Naive thymus-derived CD4-positive, alpha-beta T cell (primary cell): ENCODE measurements at regions of chr11 and their contacts with region 1.

Region 1: DNA sequence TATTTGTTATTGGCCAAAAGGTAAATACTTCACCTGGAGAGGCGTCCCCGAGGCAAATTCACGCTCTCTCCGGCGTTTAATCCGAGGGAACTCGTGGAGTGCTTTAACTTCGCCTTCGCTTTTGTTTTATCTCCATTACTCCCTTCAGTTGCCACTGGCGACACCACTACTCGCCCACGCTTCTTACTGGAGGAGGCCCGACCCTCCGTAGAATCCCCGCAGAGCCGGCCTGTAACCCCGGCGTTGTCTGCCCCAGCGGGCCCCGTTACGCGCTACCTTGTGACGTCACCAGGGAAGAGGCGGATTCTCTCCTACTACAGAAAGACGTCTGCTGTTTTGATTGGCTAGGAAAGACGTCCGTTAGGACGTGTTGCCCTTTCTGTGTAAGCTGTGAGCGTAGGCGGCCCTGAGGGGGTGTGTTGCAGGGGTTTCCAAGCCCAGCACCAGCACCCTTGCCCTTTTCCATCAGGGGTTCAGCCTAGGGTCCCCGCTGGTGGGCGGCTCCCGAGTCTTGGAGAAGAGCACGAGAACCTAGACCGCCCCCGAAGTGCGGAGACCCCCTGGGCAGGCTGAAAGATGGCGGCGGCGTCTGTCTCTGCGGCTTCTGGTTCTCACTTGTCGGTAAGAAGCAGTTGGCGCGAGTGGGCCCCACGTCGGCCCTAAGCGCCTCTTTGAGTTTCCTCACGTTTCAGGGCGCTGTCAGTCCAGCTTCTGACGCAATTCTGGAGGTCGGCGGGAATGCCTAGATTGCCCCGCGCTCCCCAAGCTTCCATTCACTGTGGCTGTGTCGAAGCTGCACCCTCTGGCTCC is at the start of gene CEP57:
- DNase-seq: peak; percentile 80 to 98 (median 96)
- ATAC-seq: peak; percentile 70
- H3K4me3 ChIP-seq: peak within 1 kb of the TSS; percentile 97
- H3K4me3 Mint-ChIP-seq: peak within 1 kb of the TSS; percentile 93 to 100 (median 100)
- H3K27ac ChIP-seq: peak within 1 kb of the TSS; percentile 99
- H3K27ac Mint-ChIP-seq: peak within 1 kb of the TSS; percentile 100
- H3K4me1 ChIP-seq: peaks cover 21 to 22% of the 10 kb centered on the region in 2 donors
- H3K4me1 Mint-ChIP-seq: peaks cover 47 to 74% (median 61%) of the 10 kb centered on the region in 7 donors
- H3K27me3 ChIP-seq: no peaks in the 10 kb centered on the region
- H3K27me3 Mint-ChIP-seq: no peaks in the 10 kb centered on the region
- total RNA-seq, gene CEP57: 47.8 to 72.3 (median 68.9) TPM

Region 2: DNA sequence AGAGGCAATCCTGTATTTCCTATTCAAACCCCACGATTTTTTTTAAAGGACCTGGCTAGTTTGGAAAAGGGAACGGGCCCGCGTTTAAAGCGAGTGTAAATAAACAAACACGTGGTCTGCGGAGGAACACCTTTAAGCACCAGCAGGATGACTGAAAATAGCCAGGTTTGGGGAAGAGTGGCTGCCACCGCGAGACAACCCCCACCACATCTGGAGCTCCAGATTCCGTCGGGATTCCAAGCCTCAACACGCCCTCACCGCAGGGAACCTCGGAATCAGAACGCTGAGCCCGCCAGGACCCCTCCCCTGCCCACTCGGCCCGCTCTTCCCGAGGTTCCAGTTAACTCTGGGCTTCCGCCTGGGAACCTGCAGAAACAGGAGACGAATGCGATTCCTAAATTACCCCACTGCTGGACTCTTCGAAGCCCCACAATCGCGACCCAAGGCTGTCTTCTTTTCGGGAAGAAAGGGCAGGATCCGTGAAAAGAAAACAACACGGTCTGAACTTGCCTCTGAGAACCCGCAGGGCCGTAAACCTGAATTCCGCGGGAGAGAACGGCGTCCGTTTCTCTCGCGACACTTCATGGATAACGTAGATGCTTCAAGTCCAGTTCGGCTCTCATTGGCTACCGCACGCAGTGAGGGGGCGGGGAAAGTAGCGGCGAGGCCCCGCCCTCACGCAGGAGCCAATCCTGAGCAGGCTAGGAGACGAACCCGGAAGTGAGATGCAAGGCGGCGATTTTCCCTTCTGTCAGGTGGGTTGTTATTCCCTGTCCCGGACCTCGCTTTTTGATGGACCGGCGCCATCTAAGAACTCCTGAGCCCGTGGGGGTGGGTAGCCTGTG is 1296.8 kb before region 1 on chr11 and contains the starts of genes ANKRD49 and MRE11:
- CTCF ChIA-PET with region 1: no interaction called
- POLR2A ChIA-PET with region 1: no interaction called
- intact Hi-C with region 1: loop called (anchors 1 to 2 kb)
- DNase-seq: peak; percentile 92 to 98 (median 97)
- ATAC-seq: peak; percentile 100
- H3K4me3 ChIP-seq: peak within 1 kb of the TSS; percentile 94
- H3K4me3 Mint-ChIP-seq: peak within 1 kb of the TSS; percentile 92 to 99 (median 96)
- H3K27ac ChIP-seq: peak within 1 kb of the TSS; percentile 93
- H3K27ac Mint-ChIP-seq: peak within 1 kb of the TSS; percentile 91 to 99 (median 97)
- H3K4me1 ChIP-seq: peaks cover 18 to 28% of the 10 kb centered on the region in 2 donors
- H3K4me1 Mint-ChIP-seq: peaks cover 31 to 64% (median 42%) of the 10 kb centered on the region in 7 donors
- H3K27me3 ChIP-seq: no peaks in the 10 kb centered on the region
- H3K27me3 Mint-ChIP-seq: no peaks in the 10 kb centered on the region
- total RNA-seq, gene ANKRD49: 25.6 to 64.4 (median 44.5) TPM
- total RNA-seq, gene MRE11: 19.0 to 45.5 (median 40.1) TPM

Region 3: DNA sequence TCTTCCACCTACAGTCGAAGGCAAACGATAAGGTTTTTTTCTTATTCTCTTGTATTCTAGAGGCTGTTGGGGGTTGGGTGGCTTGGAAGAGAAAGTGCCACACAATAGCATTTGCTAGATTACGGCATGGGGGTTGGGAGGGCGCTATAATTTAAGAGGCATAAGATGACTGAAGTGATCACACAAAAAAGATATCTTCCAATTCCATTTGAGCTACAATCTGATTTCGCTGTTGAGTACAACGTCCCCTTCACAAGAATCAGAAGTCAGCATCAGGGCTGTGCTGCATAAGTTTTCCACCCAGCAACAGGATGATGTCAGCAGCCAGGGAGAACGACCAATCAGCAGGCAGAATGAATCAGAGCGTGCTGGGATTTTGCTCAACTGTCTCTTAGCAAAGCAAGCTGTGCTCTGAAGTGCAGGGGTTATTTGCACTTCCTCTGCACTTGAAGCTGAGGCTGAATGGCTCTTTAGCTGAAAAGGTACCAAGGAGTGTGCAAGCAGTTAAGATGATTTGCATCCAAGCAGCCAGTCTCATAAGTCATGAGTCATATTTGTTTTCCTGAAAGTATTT is 536.1 kb before region 1 on chr11:
- CTCF ChIA-PET with region 1: no interaction called
- POLR2A ChIA-PET with region 1: no interaction called
- intact Hi-C with region 1: loop called in 1 of 2 experiments (anchors 1 kb)
- DNase-seq: peak; percentile 45 to 91 (median 84)
- ATAC-seq: peak; percentile 98
- H3K4me3 ChIP-seq: peak overlapping the region; percentile 52
- H3K4me3 Mint-ChIP-seq: peak overlapping the region; percentile 74 to 98 (median 89)
- H3K27ac ChIP-seq: peak overlapping the region; percentile 71
- H3K27ac Mint-ChIP-seq: peak overlapping the region; percentile 81 to 98 (median 90)
- H3K4me1 ChIP-seq: peaks cover 13 to 31% of the 10 kb centered on the region in 2 donors
- H3K4me1 Mint-ChIP-seq: peaks cover 20 to 59% (median 53%) of the 10 kb centered on the region in 7 donors
- H3K27me3 ChIP-seq: no peaks in the 10 kb centered on the region
- H3K27me3 Mint-ChIP-seq: no peaks in the 10 kb centered on the region

Region 4: DNA sequence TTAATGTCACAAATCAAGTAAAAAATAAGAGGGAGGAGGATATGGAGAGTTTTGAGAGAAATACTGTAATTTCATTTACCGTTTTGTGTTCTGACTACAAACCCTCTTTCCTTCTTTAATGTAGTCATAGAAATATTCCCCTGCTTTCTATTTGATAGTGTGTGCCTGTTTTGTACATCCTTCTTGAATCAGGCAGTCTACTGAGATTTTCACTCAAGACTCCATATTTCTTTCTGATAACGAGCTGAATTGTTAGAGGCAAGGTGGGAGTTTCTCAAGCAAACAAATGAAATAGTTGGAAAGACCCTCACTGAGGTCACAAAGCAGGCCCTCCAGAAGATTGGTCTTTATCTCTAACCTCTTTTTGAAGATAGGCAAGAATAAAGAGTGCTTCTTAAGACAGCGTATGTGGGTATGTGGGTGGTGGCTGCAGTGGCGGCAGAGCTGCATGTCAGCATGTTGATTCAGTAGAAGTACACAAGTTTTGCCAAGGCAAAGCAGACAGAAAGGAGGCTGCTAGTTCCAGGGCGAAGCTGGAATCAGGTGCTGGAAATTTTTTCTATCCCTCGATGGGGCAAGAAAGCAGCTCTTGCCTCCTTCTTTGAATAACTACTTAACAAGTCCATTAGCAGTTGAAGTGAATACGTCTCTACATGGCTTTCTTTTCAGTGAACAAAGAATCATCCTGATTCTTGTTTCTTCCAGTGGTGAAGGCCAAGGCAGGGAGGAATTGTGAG is 165.0 kb before region 1 on chr11:
- CTCF ChIA-PET with region 1: no interaction called
- POLR2A ChIA-PET with region 1: no interaction called
- intact Hi-C with region 1: no loop called
- DNase-seq: peak in 1 of 9 donors; percentile 8
- ATAC-seq: peak; percentile 27
- H3K4me3 ChIP-seq: no peak overlapping the region
- H3K4me3 Mint-ChIP-seq: peak overlapping the region in 5 of 10 donors; percentile 13 to 66 (median 47)
- H3K27ac ChIP-seq: peak overlapping the region; percentile 52
- H3K27ac Mint-ChIP-seq: peak overlapping the region in 8 of 9 donors; percentile 22 to 82 (median 70)
- H3K4me1 ChIP-seq: no peaks in the 10 kb centered on the region
- H3K4me1 Mint-ChIP-seq: peaks cover 0 to 11% (median 9%) of the 10 kb centered on the region in 7 donors
- H3K27me3 ChIP-seq: no peaks in the 10 kb centered on the region
- H3K27me3 Mint-ChIP-seq: peaks cover 0 to 2% (median 0%) of the 10 kb centered on the region in 5 donors

Region 5: GRCh38 chr11:95923728-95924413 is 133.5 kb after region 1 on chr11 and contains the start of gene MTMR2:
- CTCF ChIA-PET with region 1: no interaction called
- POLR2A ChIA-PET with region 1: no interaction called
- intact Hi-C with region 1: loop called in 1 of 2 experiments (anchors 1 kb)
- DNase-seq: peak in 8 of 9 donors; percentile 16 to 70 (median 26)
- ATAC-seq: peak; percentile 87
- H3K4me3 ChIP-seq: peak within 1 kb of the TSS; percentile 91
- H3K4me3 Mint-ChIP-seq: peak within 1 kb of the TSS; percentile 85 to 98 (median 94)
- H3K27ac ChIP-seq: peak within 1 kb of the TSS; percentile 65
- H3K27ac Mint-ChIP-seq: peak within 1 kb of the TSS; percentile 80 to 96 (median 90)
- H3K4me1 ChIP-seq: peaks cover 0 to 12% of the 10 kb centered on the region in 2 donors
- H3K4me1 Mint-ChIP-seq: peaks cover 18 to 37% (median 25%) of the 10 kb centered on the region in 7 donors
- H3K27me3 ChIP-seq: no peaks in the 10 kb centered on the region
- H3K27me3 Mint-ChIP-seq: peaks cover 5 to 11% (median 8%) of the 10 kb centered on the region in 5 donors
- total RNA-seq, gene MTMR2: 9.0 to 20.8 (median 10.5) TPM

Region 6: DNA sequence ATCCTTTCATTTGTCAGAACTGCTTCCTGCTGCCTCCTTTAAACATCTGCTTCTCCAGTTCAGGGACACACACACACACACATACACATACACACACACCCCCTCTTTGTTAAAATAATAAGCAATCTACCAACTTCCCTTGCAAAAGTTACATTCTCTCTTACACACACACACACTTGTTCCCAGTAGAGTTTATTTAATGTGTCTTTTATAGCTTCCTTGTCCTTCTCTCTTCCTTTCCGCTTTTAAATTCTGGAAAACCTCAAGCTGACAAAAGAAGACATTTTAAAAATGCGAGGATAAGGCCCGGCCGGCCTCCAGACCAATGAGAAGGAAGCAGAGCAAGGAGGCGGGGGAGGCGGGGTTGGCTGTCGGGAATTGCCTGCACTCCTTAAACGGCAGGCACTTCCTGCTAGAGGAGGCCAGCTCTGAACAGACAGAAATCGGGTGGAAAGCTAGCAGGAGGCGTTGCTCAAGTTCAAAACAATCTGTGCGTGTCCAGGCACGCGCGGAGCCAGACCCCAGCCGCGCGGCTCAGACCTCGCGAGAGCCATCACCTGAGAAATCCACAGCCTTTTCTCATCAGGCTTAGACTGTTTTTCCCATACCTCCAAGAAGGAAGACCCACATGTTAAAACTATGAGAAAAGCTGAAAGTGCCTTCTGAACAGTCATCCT is 452.8 kb after region 1 on chr11:
- CTCF ChIA-PET with region 1: no interaction called
- POLR2A ChIA-PET with region 1: no interaction called
- intact Hi-C with region 1: loop called in 1 of 2 experiments (anchors 1 kb)
- DNase-seq: peak; percentile 47 to 83 (median 66)
- ATAC-seq: peak; percentile 92
- H3K4me3 ChIP-seq: peak overlapping the region; percentile 63
- H3K4me3 Mint-ChIP-seq: peak overlapping the region; percentile 76 to 89 (median 84)
- H3K27ac ChIP-seq: peak overlapping the region; percentile 72
- H3K27ac Mint-ChIP-seq: peak overlapping the region; percentile 86 to 94 (median 92)
- H3K4me1 ChIP-seq: peaks cover 8 to 61% of the 10 kb centered on the region in 2 donors
- H3K4me1 Mint-ChIP-seq: peaks cover 37 to 72% (median 63%) of the 10 kb centered on the region in 7 donors
- H3K27me3 ChIP-seq: no peaks in the 10 kb centered on the region
- H3K27me3 Mint-ChIP-seq: no peaks in the 10 kb centered on the region

Region 7: GRCh38 chr11:96424693-96425092 is 634.4 kb after region 1 on chr11:
- CTCF ChIA-PET with region 1: no interaction called
- POLR2A ChIA-PET with region 1: no interaction called
- intact Hi-C with region 1: loop called (anchors 1 to 2 kb)
- DNase-seq: no peak
- ATAC-seq: no peak
- H3K4me3 ChIP-seq: no peak overlapping the region
- H3K4me3 Mint-ChIP-seq: no peak overlapping the region
- H3K27ac ChIP-seq: no peak overlapping the region
- H3K27ac Mint-ChIP-seq: no peak overlapping the region
- H3K4me1 ChIP-seq: no peaks in the 10 kb centered on the region
- H3K4me1 Mint-ChIP-seq: peaks cover 0 to 6% (median 0%) of the 10 kb centered on the region in 7 donors
- H3K27me3 ChIP-seq: peaks cover 0 to 3% of the 10 kb centered on the region in 2 donors
- H3K27me3 Mint-ChIP-seq: peaks cover 27 to 49% (median 44%) of the 10 kb centered on the region in 5 donors